Activated T-helper 2 cell treated with anti-CD3 and anti-CD28 coated beads, Interferon-gamma antibody, Interleukin-2, Interleukin-4, amounts not matched to agents 10 μg/mL and 5 μg/mL and 100 μg/mL, durations not matched to agents 14 hours and 24 hours and 36 hours (primary cell): ENCODE measurements at regions of chr12 and their contacts with region 1.

Region 1: GRCh38 chr12:1583421-1584078 is 10.8 kb downstream of the FBXL14 start:
- DNase-seq: peak; percentile 50
- H3K4me3 Mint-ChIP-seq: no peak overlapping the region
- H3K27ac Mint-ChIP-seq: no peak overlapping the region
- H3K4me1 Mint-ChIP-seq: peaks cover 17% of the 10 kb centered on the region
- H3K27me3 Mint-ChIP-seq: no peaks in the 10 kb centered on the region

Region 2: DNA sequence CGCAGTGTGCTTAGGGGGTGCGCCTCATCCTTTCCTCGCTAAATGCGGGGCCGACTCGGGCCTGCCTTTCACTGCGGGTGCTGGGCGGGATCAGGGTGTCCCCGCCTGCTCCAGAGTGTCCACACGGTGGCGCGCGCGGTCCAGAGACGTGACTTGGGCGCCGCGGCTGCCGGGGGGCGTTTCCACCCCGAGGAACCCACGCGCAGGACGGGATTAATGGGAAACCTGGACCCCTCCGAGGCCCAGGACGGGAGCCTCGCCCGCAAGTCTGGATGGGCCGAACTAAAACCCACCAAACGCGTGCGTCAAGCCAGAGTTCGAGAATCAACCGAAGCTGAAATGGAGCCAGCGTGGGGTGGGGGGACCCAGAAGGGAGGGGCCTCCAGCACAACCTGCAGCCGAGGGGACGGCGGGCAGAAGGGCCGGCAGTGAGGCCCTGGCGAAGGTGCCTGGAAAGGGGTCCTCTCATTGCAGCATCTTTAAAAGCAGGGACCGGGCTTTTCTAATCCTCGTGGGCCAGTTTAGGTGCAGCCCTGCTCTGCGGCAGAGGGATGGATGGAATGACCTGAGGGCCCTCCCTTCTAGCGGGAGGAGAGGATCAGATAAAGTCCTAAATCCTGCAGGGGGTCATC is 1013.6 kb before region 1 on chr12:
- intact Hi-C with region 1: loop called (anchors 5 kb)
- DNase-seq: peak; percentile 76
- H3K4me3 Mint-ChIP-seq: peak overlapping the region; percentile 79
- H3K27ac Mint-ChIP-seq: peak overlapping the region; percentile 31
- H3K4me1 Mint-ChIP-seq: peaks cover 32% of the 10 kb centered on the region
- H3K27me3 Mint-ChIP-seq: no peaks in the 10 kb centered on the region

Region 3: GRCh38 chr12:1117970-1118563 is 465.5 kb before region 1 on chr12:
- intact Hi-C with region 1: loop called (anchors 1 kb)
- DNase-seq: peak; percentile 57
- H3K4me3 Mint-ChIP-seq: no peak overlapping the region
- H3K27ac Mint-ChIP-seq: no peak overlapping the region
- H3K4me1 Mint-ChIP-seq: peaks cover 14% of the 10 kb centered on the region
- H3K27me3 Mint-ChIP-seq: no peaks in the 10 kb centered on the region

Region 4: GRCh38 chr12:1204581-1205121 is 378.9 kb before region 1 on chr12:
- intact Hi-C with region 1: loop called (anchors 10 kb)
- DNase-seq: no peak
- H3K4me3 Mint-ChIP-seq: no peak overlapping the region
- H3K27ac Mint-ChIP-seq: no peak overlapping the region
- H3K4me1 Mint-ChIP-seq: peaks cover 25% of the 10 kb centered on the region
- H3K27me3 Mint-ChIP-seq: no peaks in the 10 kb centered on the region

Region 5: GRCh38 chr12:1559676-1560091 is 23.9 kb before region 1 on chr12:
- intact Hi-C with region 1: no loop called
- DNase-seq: no peak
- H3K4me3 Mint-ChIP-seq: no peak overlapping the region
- H3K27ac Mint-ChIP-seq: no peak overlapping the region
- H3K4me1 Mint-ChIP-seq: no peaks in the 10 kb centered on the region
- H3K27me3 Mint-ChIP-seq: peaks cover 12% of the 10 kb centered on the region

Region 6: DNA sequence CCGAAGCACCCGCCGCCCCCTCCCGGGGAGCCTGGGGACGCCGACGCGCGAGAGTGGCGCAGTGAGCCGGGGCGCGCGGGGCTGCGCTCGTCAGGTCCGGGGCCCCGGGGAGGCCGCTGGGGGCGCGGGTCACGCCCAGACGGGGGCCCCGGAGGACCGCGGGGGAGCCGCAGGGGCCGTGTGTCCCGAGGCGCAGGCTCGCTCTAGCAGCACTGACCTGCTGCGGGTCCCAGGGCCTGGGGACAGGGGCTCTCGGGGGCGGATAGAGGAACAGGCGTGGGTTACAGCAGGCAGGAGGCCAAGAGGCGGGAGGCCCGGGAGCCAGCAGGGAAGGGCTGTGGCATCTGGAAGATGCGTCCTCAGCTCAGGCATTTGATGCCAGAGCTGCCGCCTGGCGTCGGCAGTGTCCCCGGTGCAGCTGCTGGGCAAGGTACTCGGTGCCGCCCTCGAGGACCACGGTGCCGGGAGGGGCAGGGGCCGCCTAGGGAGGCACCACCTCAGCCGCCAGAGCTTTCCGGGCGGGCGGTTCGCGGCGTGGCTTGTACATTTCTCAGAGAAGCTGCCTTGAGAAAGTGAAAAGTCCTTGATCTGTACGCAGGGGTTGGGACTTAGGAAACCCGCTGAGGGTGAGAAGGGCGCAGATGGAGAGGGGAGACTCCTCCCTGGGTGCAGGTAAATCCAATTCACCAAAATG is 46.7 kb after region 1 on chr12:
- intact Hi-C with region 1: no loop called
- DNase-seq: no peak
- H3K4me3 Mint-ChIP-seq: peak overlapping the region; percentile 45
- H3K27ac Mint-ChIP-seq: no peak overlapping the region
- H3K4me1 Mint-ChIP-seq: peaks cover 9% of the 10 kb centered on the region
- H3K27me3 Mint-ChIP-seq: peaks cover 64% of the 10 kb centered on the region

Region 7: GRCh38 chr12:1732914-1733313 is 149.4 kb after region 1 on chr12:
- intact Hi-C with region 1: no loop called
- DNase-seq: no peak
- H3K4me3 Mint-ChIP-seq: no peak overlapping the region
- H3K27ac Mint-ChIP-seq: no peak overlapping the region
- H3K4me1 Mint-ChIP-seq: peaks cover 7% of the 10 kb centered on the region
- H3K27me3 Mint-ChIP-seq: no peaks in the 10 kb centered on the region